ENCODE measurements at regions of chr17 and their contacts with region 1.

Region 1: GRCh38 chr17:77957857-77958715 is at the start of gene TNRC6C:
- DNase-seq: peak; percentile 98
- ATAC-seq: peak; percentile 85
- H3K4me3 Mint-ChIP-seq: peak within 1 kb of the TSS; percentile 89
- H3K27ac Mint-ChIP-seq: peak within 1 kb of the TSS; percentile 96
- H3K4me1 Mint-ChIP-seq: peaks cover 41% of the 10 kb centered on the region
- H3K27me3 Mint-ChIP-seq: peaks cover 15% of the 10 kb centered on the region
- CTCF ChIP-seq: no peak
- total RNA-seq, gene TNRC6C: 14.4 and 24.6 TPM in 2 replicates

Region 2: GRCh38 chr17:77088455-77089123 is 869.5 kb before region 1 on chr17:
- CTCF ChIA-PET with region 1: no interaction called
- POLR2A ChIA-PET with region 1: interaction called, 10 read pairs
- intact Hi-C with region 1: no loop called
- DNase-seq: peak; percentile 84
- ATAC-seq: peak; percentile 89
- H3K4me3 Mint-ChIP-seq: peak overlapping the region; percentile 95
- H3K27ac Mint-ChIP-seq: peak overlapping the region; percentile 95
- H3K4me1 Mint-ChIP-seq: peaks cover 52% of the 10 kb centered on the region
- H3K27me3 Mint-ChIP-seq: peaks cover 3% of the 10 kb centered on the region
- CTCF ChIP-seq: no peak

Region 3: DNA sequence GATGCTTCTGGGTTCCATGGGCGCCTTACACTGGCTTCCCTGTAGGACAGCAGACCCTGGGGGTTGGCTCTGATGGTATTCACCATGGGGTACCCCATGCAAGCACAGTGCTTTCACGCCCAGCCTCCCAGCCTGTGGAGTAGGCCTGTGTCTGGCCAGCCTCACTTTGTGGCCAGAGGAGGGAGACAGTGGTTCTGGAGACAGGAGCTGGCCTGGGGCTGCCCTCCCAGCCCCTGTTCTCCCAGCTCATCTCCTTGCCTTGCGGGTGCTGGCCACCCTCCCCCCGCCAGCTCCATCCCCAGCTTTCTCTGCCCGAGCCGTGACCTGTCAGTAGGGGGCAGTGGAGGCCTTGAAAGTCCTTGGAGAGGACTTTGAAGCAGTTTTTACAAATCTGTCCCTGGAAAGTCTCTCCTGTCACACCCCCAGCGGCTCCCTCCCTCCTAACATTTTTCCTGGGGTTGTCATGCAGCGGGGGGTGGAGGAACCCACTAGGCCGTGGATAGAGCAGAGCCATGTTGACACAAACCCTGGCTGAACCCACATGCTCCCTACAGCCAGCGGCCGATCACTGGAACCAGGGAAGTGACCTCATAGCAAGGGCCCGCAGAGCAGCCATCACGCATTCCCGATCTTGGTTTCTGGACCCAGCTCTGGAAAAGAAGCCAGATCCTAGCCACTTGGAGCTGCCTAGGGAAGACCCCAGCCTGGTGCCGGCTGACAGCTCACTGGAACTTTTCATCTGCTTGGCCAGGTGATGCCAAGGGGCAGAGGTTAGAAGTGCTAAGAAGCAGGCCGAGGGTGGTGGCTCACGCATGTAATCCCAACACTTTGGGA is 528.0 kb before region 1 on chr17:
- CTCF ChIA-PET with region 1: no interaction called
- POLR2A ChIA-PET with region 1: interaction called, 10 read pairs
- intact Hi-C with region 1: no loop called
- DNase-seq: peak; percentile 67
- ATAC-seq: peak; percentile 37
- H3K4me3 Mint-ChIP-seq: no peak overlapping the region
- H3K27ac Mint-ChIP-seq: peak overlapping the region; percentile 63
- H3K4me1 Mint-ChIP-seq: peaks cover 96% of the 10 kb centered on the region
- H3K27me3 Mint-ChIP-seq: no peaks in the 10 kb centered on the region
- CTCF ChIP-seq: no peak

Region 4: GRCh38 chr17:77772461-77772897 is 185.6 kb before region 1 on chr17:
- CTCF ChIA-PET with region 1: interaction called, 3 read pairs
- POLR2A ChIA-PET with region 1: interaction called, 4 read pairs
- intact Hi-C with region 1: loop called (anchors 2 kb)
- DNase-seq: peak; percentile 50
- ATAC-seq: peak; percentile 95
- H3K4me3 Mint-ChIP-seq: no peak overlapping the region
- H3K27ac Mint-ChIP-seq: no peak overlapping the region
- H3K4me1 Mint-ChIP-seq: peaks cover 11% of the 10 kb centered on the region
- H3K27me3 Mint-ChIP-seq: peaks cover 12% of the 10 kb centered on the region
- CTCF ChIP-seq: no peak

Region 5: GRCh38 chr17:77887464-77888241 is 70.4 kb before region 1 on chr17:
- CTCF ChIA-PET with region 1: no interaction called
- POLR2A ChIA-PET with region 1: interaction called, 132 read pairs
- intact Hi-C with region 1: loop called (anchors 1 kb)
- DNase-seq: peak; percentile 56
- ATAC-seq: peak; percentile 85
- H3K4me3 Mint-ChIP-seq: peak overlapping the region; percentile 79
- H3K27ac Mint-ChIP-seq: peak overlapping the region; percentile 1
- H3K4me1 Mint-ChIP-seq: peaks cover 64% of the 10 kb centered on the region
- H3K27me3 Mint-ChIP-seq: peaks cover 14% of the 10 kb centered on the region
- CTCF ChIP-seq: no peak

Region 6: GRCh38 chr17:78013683-78014467 is 55.8 kb after region 1 on chr17:
- CTCF ChIA-PET with region 1: interaction called, 7 read pairs
- POLR2A ChIA-PET with region 1: interaction called, 5 read pairs
- intact Hi-C with region 1: loop called (anchors 2 kb)
- DNase-seq: no peak
- ATAC-seq: peak; percentile 54
- H3K4me3 Mint-ChIP-seq: no peak overlapping the region
- H3K27ac Mint-ChIP-seq: no peak overlapping the region
- H3K4me1 Mint-ChIP-seq: peaks cover 2% of the 10 kb centered on the region
- H3K27me3 Mint-ChIP-seq: no peaks in the 10 kb centered on the region
- CTCF ChIP-seq: peak; percentile 52

Region 7: GRCh38 chr17:78231991-78232858 is 274.1 kb after region 1 on chr17:
- CTCF ChIA-PET with region 1: no interaction called
- POLR2A ChIA-PET with region 1: no interaction called
- intact Hi-C with region 1: no loop called
- DNase-seq: no peak
- ATAC-seq: peak; percentile 75
- H3K4me3 Mint-ChIP-seq: no peak overlapping the region
- H3K27ac Mint-ChIP-seq: no peak overlapping the region
- H3K4me1 Mint-ChIP-seq: peaks cover 13% of the 10 kb centered on the region
- H3K27me3 Mint-ChIP-seq: peaks cover 23% of the 10 kb centered on the region
- CTCF ChIP-seq: no peak

Measured in activated B cell treated with CpG ODN at 0.5 μM for 24 hours (primary cell).